Psoas muscle (tissue), 8 donors: ENCODE measurements at regions of chrX and their contacts with region 1.

Region 1: DNA sequence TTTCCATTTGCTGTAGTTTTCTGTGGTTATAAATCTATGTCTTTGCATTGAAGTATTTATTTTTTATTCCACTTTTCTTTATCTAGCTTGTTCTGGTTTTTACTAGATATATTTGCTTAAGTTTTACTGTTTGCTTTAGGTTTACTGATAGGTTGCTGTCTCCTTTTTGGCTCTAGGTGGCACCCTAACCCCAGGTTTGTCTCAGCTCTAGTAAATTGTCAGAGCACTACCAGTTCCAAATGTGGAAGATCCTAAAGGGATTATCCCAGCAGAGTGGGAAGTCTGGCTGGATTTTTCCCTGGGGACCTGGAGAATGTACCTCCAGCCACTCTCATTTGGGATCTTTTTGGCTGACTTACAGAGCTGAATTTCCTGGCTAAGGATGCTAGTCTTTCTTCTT is 106.1 kb downstream of the PBDC1 start:
- DNase-seq: no peak
- ATAC-seq: no peak
- H3K4me3 ChIP-seq: no peak overlapping the region
- H3K27ac ChIP-seq: no peak overlapping the region
- H3K4me1 ChIP-seq: no peaks in the 10 kb centered on the region
- H3K27me3 ChIP-seq: peaks cover 0 to 4% (median 0%) of the 10 kb centered on the region in 3 donors
- CTCF ChIP-seq: peak; percentile 59

Region 2: GRCh38 chrX:76454456-76454927 is 175.5 kb after region 1 on chrX:
- intact Hi-C with region 1: loop called (anchors 5 kb)
- DNase-seq: no peak
- ATAC-seq: peak in 3 of 4 donors; percentile 30 to 56 (median 46)
- H3K4me3 ChIP-seq: no peak overlapping the region
- H3K27ac ChIP-seq: no peak overlapping the region
- H3K4me1 ChIP-seq: no peaks in the 10 kb centered on the region
- H3K27me3 ChIP-seq: peaks cover 0 to 5% (median 0%) of the 10 kb centered on the region in 3 donors
- CTCF ChIP-seq: peak; percentile 62

Region 3: DNA sequence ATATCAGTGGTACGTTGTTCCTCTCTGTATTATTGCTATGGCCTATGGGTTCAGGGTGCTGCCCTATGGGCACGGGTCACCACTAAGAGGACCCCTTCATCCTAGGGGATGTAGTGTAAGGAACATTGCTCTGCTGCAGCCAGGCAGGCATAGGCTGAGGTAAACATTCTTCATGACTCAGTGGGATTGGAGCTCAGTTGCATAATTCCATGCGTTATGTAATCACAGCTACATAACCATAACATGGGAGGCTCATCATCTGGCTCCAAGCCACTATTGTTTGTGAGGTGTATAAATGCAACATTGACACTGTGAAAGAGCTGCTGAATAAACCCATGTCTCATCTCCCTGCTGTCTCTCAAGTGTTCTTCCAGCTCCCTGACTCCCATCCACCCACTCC is 523.7 kb after region 1 on chrX:
- intact Hi-C with region 1: loop called in 1 of 2 experiments (anchors 5 kb)
- DNase-seq: no peak
- ATAC-seq: no peak
- H3K4me3 ChIP-seq: no peak overlapping the region
- H3K27ac ChIP-seq: no peak overlapping the region
- H3K4me1 ChIP-seq: no peaks in the 10 kb centered on the region
- H3K27me3 ChIP-seq: peaks cover 0 to 3% (median 0%) of the 10 kb centered on the region in 3 donors
- CTCF ChIP-seq: no peak

Region 4: DNA sequence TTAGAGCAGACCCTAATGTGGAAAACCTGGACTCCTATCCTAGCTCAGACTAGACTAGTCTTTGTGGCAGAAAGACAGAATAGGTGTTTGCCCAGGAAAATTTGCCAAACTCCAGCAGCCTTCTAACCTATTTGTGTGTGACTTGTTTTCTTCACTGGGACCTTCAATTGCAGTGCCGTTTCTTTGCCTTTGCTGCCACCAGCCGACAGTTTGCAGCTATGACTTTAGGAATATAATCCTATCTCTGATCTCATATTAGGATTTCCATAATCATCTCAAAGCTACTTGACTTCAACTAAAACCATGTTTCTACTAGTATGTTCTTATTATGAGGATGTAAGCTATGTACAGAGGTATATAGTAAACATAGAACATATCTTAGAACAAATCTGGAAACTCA is 1750.7 kb after region 1 on chrX:
- intact Hi-C with region 1: loop called in 1 of 2 experiments (anchors 10 kb)
- DNase-seq: no peak
- ATAC-seq: no peak
- H3K4me3 ChIP-seq: no peak overlapping the region
- H3K27ac ChIP-seq: no peak overlapping the region
- H3K4me1 ChIP-seq: no peaks in the 10 kb centered on the region
- H3K27me3 ChIP-seq: no peaks in the 10 kb centered on the region
- CTCF ChIP-seq: peak; percentile 37